CD4-positive, alpha-beta memory T cell (primary cell): ENCODE measurements at regions of chr16 and their contacts with region 1.

Region 1: GRCh38 chr16:87636072-87636684 is 33.9 kb downstream of the JPH3 start:
- DNase-seq: peak; percentile 71 to 82 (median 73)
- H3K4me3 ChIP-seq: peak overlapping the region in 1 of 2 donors; percentile 59
- H3K4me3 Mint-ChIP-seq: peak overlapping the region; percentile 82 to 95 (median 88)
- H3K27ac ChIP-seq: peak overlapping the region; percentile 20
- H3K27ac Mint-ChIP-seq: peak overlapping the region in 6 of 7 donors; percentile 13 to 87 (median 71)
- H3K4me1 ChIP-seq: peaks cover 20% of the 10 kb centered on the region
- H3K4me1 Mint-ChIP-seq: peaks cover 4 to 21% (median 11%) of the 10 kb centered on the region in 4 donors
- H3K27me3 ChIP-seq: no peaks in the 10 kb centered on the region
- H3K27me3 Mint-ChIP-seq: peaks cover under 1 to 4% of the 10 kb centered on the region in 2 donors

Region 2: GRCh38 chr16:87416826-87417527 is 219.2 kb before region 1 on chr16:
- CTCF ChIA-PET with region 1: interaction called, 14 read pairs
- POLR2A ChIA-PET with region 1: no interaction called
- intact Hi-C with region 1: no loop called
- DNase-seq: peak in 2 of 5 donors; percentile 23 to 40
- H3K4me3 ChIP-seq: no peak overlapping the region
- H3K4me3 Mint-ChIP-seq: no peak overlapping the region
- H3K27ac ChIP-seq: no peak overlapping the region
- H3K27ac Mint-ChIP-seq: peak overlapping the region in 1 of 7 donors; percentile 63
- H3K4me1 ChIP-seq: no peaks in the 10 kb centered on the region
- H3K4me1 Mint-ChIP-seq: no peaks in the 10 kb centered on the region
- H3K27me3 ChIP-seq: no peaks in the 10 kb centered on the region
- H3K27me3 Mint-ChIP-seq: no peaks in the 10 kb centered on the region

Region 3: DNA sequence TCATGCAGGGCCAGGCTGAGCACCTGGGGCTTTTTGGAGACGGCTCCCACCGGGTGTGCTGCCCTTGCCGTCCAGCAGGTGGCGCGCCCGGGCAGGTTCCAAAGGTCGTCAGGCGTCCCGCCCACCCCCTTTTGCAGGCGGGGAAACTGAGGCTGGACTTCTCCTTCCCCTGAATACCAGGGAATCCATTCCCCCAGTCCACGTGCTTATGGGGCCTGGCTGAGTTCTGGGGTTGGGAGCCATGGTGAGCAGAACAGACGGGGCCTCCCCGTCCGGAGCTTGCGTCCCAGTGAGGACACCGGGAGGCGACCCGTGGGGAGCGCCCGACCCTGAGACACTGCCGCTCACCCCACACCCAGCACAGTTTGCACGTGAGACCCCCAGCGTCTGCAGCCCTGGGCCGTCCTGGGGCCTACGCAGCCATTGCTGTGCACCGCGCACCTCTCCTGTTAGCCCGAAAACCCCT is 85.6 kb before region 1 on chr16:
- CTCF ChIA-PET with region 1: interaction called, 27 read pairs
- POLR2A ChIA-PET with region 1: no interaction called
- intact Hi-C with region 1: no loop called
- DNase-seq: peak in 4 of 5 donors; percentile 37 to 55 (median 46)
- H3K4me3 ChIP-seq: no peak overlapping the region
- H3K4me3 Mint-ChIP-seq: no peak overlapping the region
- H3K27ac ChIP-seq: no peak overlapping the region
- H3K27ac Mint-ChIP-seq: no peak overlapping the region
- H3K4me1 ChIP-seq: no peaks in the 10 kb centered on the region
- H3K4me1 Mint-ChIP-seq: peaks cover 0 to 5% (median 1%) of the 10 kb centered on the region in 4 donors
- H3K27me3 ChIP-seq: no peaks in the 10 kb centered on the region
- H3K27me3 Mint-ChIP-seq: peaks cover 9 to 12% of the 10 kb centered on the region in 2 donors

Region 4: DNA sequence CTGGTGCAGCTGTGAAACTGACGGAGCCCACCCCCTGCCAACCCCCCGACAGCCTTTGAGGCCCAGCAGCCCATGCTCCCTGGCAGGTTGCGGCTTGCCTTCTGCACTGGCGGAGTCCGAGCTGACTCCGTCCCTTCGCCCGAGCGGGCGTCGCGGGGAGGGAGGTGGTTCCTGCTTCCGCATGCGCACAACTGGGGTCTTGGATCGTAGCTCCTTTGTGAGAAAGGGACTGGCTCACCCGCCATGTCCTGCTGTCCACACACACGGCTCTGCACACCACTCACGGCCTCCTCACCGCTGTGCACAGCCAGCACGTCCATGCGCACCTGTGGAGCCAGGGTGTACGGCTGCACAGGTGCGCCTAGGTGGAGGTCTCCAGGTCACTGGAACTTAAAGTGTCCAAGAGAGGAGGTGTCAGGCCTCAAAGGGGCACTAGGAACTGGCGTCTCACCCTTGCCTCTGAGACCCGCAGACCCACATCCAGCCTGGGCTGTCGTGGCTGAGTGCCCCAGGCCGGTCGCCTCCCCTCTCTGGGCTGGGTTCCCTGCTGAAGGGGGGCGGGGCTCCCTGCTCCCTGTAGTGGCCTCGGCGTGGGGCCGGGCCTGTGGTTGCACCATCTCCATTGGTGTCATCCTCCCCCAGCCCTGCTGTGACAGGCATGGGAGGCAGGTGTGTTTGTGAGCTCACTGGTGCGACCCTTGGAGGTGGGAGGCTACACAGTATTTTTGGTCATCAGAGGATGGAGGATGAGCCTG is 11.4 kb after region 1 on chr16:
- CTCF ChIA-PET with region 1: interaction called, 17 read pairs
- POLR2A ChIA-PET with region 1: no interaction called
- intact Hi-C with region 1: no loop called
- DNase-seq: no peak
- H3K4me3 ChIP-seq: no peak overlapping the region
- H3K4me3 Mint-ChIP-seq: no peak overlapping the region
- H3K27ac ChIP-seq: no peak overlapping the region
- H3K27ac Mint-ChIP-seq: no peak overlapping the region
- H3K4me1 ChIP-seq: no peaks in the 10 kb centered on the region
- H3K4me1 Mint-ChIP-seq: no peaks in the 10 kb centered on the region
- H3K27me3 ChIP-seq: no peaks in the 10 kb centered on the region
- H3K27me3 Mint-ChIP-seq: peaks cover 3 to 8% of the 10 kb centered on the region in 2 donors